Activated CD4-positive, alpha-beta T cell treated with anti-CD3 and anti-CD28 coated beads, Interleukin-2, amount 10 ng/mL, durations not matched to agents 24 days and 14 days (primary cell): ENCODE measurements at regions of chr5 and their contacts with region 1.

Region 1: DNA sequence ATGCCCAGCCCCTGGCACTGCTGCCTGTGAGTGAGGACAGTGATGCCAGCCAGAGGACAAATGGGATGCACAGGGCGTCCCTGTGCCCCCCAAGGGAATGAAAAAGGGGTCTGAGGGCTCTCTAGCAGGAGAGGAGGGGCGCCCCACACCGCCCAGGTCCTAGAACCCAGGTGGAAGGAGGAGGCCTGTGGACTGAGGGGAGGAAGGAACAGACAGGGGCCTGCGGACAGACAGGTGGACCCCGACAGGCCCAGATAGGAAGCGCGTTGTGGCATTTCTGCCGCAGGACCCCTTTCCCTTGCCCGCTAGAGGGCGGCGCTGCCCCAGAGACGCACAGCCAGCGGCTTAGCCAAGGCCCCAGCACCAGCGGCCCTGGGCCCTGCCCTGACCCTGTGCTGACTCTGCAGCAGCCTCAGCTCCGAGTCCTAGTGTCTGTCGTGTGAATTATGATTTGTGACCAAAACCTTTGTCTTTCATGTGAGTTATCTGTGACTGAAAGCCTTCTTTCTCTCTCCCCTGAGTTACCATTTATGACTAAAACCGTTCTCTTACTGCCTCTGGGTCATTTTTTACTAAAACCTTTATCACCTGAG is 30.7 kb downstream of the TRIP13 start:
- DNase-seq: peak; percentile 93
- H3K4me3 Mint-ChIP-seq: no peak overlapping the region
- H3K27ac Mint-ChIP-seq: no peak overlapping the region
- H3K4me1 Mint-ChIP-seq: peaks cover 10% of the 10 kb centered on the region
- H3K27me3 Mint-ChIP-seq: peaks cover 26% of the 10 kb centered on the region

Region 2: GRCh38 chr5:963673-964531 is 40.5 kb after region 1 on chr5:
- intact Hi-C with region 1: loop called (anchors 5 kb)
- DNase-seq: peak; percentile 91
- H3K4me3 Mint-ChIP-seq: peak overlapping the region; percentile 84
- H3K27ac Mint-ChIP-seq: peak overlapping the region; percentile 96
- H3K4me1 Mint-ChIP-seq: peaks cover 43% of the 10 kb centered on the region
- H3K27me3 Mint-ChIP-seq: peaks cover 21% of the 10 kb centered on the region

Region 3: DNA sequence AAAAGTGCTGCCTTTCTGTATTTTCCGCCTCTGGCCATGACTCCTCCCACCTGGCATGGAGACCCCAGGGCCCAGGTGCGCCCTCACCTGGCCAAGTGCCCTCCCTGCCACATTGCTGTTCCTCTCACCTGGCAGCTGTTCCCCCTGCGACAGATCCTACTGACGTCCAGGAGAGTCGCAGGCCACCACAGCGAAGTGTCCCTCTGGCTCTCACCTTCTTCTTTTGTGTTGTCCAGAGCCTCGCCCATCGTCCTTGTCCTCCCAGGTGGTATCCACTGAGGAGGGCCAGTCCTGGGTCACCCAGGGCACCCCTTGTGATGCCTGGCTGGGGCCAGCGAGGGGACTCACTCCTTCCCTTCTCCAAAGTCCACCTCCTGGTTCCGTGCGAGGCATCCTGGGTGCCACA is 87.9 kb after region 1 on chr5:
- intact Hi-C with region 1: loop called (anchors 1 kb)
- DNase-seq: peak; percentile 87
- H3K4me3 Mint-ChIP-seq: no peak overlapping the region
- H3K27ac Mint-ChIP-seq: no peak overlapping the region
- H3K4me1 Mint-ChIP-seq: peaks cover 4% of the 10 kb centered on the region
- H3K27me3 Mint-ChIP-seq: peaks cover 31% of the 10 kb centered on the region

Region 4: DNA sequence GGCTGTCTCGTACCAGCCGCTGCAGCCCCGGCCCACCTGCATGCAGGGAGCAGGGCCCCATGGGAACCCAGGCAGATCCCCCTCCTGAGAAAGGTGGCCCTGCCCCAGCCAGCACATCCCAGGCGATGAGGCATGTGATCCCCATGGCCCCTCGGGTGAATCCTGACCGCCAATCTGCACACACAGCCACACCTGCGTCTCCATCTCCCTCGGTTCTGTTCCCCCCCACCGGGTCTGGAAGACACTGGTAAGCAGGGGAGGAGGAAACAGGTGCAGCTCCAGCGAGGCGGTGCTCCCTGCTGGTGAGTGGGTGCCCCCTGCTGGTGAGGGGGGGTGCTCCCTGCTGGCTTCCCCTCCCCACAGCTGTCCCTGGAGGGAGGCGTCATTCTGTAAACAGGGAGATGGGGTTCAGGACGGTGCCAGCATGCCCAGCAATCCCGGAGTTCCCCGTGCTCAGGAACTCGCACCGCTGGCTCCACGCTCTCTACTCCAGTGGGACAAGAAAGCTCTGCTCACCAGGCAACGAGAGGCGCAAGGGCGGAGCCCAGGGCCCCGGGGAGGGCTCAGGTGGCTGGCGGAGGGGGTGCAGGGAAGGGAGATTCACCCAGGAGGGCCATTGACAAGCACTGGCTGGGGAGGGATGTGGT is 216.9 kb after region 1 on chr5:
- intact Hi-C with region 1: loop called (anchors 1 kb)
- DNase-seq: peak; percentile 95
- H3K4me3 Mint-ChIP-seq: no peak overlapping the region
- H3K27ac Mint-ChIP-seq: no peak overlapping the region
- H3K4me1 Mint-ChIP-seq: peaks cover 5% of the 10 kb centered on the region
- H3K27me3 Mint-ChIP-seq: no peaks in the 10 kb centered on the region